Activated T-helper 1 cell treated with anti-CD3 and anti-CD28 coated beads, Interleukin-12 subunit alpha, Interleukin-12 subunit beta, Interleukin-2, Interleukin-4 antibody, amounts not matched to agents 30 ng/mL and 10 ng/mL and 1 ng/mL, durations not matched to agents 14 hours and 24 hours and 36 hours (primary cell): ENCODE measurements at regions of chr11 and their contacts with region 1.

Region 1: DNA sequence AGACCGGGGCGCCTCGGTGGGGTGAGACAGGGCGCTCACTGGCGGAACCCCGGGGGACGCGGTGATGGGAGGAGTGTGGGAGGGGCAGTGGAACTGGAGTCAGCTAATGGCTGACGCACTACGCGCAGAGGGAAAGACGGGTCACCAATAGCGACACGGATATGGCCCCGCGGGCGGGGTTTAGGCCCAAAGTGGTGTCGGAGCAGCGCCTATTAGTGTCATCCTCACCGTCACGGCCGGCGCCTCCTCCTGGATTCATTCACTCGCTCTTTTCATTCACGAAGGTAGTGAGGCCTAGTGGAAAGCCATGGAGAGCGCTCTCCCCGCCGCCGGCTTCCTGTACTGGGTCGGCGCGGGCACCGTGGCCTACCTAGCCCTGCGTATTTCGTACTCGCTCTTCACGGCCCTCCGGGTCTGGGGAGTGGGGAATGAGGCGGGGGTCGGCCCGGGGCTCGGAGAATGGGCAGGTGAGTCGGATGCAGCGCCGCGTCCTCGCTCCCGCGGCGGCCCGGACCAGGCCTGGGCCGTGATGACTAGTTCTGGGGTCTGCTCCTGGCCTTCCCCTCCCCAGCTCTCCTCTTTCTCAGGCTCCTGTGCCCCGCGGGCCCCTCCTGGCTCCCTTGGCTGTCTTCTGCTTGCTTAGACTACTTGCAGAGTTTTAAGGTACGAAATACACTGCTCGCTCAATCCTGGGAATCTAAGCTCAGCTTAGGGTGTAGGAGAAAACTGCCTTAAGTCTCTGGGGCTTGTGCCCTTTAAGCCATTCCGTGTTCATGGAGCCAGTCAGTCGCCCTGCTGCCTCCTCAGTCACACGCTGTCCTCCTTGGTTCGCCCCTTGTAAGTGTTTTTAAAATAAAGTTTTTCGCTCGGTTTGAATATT is at the start of gene HSD17B12:
- DNase-seq: peak; percentile 99
- H3K4me3 Mint-ChIP-seq: peak within 1 kb of the TSS; percentile 99
- H3K27ac Mint-ChIP-seq: peak within 1 kb of the TSS; percentile 94
- H3K4me1 Mint-ChIP-seq: peaks cover 40% of the 10 kb centered on the region
- H3K27me3 Mint-ChIP-seq: peaks cover 9% of the 10 kb centered on the region
- total RNA-seq, gene HSD17B12: 72.3 and 77.8 TPM in 2 replicates

Region 2: GRCh38 chr11:43358801-43359421 is 321.9 kb before region 1 on chr11 and contains the start of gene TTC17:
- intact Hi-C with region 1: loop called (anchors 1 kb)
- DNase-seq: peak; percentile 92
- H3K4me3 Mint-ChIP-seq: peak within 1 kb of the TSS; percentile 94
- H3K27ac Mint-ChIP-seq: peak within 1 kb of the TSS; percentile 92
- H3K4me1 Mint-ChIP-seq: peaks cover 38% of the 10 kb centered on the region
- H3K27me3 Mint-ChIP-seq: peaks cover 2% of the 10 kb centered on the region
- total RNA-seq, gene TTC17: 74.4 and 74.7 TPM in 2 replicates

Region 3: GRCh38 chr11:43788421-43788820 is 107.7 kb after region 1 on chr11:
- intact Hi-C with region 1: no loop called
- DNase-seq: no peak
- H3K4me3 Mint-ChIP-seq: no peak overlapping the region
- H3K27ac Mint-ChIP-seq: no peak overlapping the region
- H3K4me1 Mint-ChIP-seq: no peaks in the 10 kb centered on the region
- H3K27me3 Mint-ChIP-seq: no peaks in the 10 kb centered on the region

Region 4: GRCh38 chr11:43830928-43831440 is 150.2 kb after region 1 on chr11:
- intact Hi-C with region 1: loop called (anchors 1 kb)
- DNase-seq: peak; percentile 2
- H3K4me3 Mint-ChIP-seq: no peak overlapping the region
- H3K27ac Mint-ChIP-seq: peak overlapping the region; percentile 80
- H3K4me1 Mint-ChIP-seq: peaks cover 18% of the 10 kb centered on the region
- H3K27me3 Mint-ChIP-seq: no peaks in the 10 kb centered on the region

Region 5: DNA sequence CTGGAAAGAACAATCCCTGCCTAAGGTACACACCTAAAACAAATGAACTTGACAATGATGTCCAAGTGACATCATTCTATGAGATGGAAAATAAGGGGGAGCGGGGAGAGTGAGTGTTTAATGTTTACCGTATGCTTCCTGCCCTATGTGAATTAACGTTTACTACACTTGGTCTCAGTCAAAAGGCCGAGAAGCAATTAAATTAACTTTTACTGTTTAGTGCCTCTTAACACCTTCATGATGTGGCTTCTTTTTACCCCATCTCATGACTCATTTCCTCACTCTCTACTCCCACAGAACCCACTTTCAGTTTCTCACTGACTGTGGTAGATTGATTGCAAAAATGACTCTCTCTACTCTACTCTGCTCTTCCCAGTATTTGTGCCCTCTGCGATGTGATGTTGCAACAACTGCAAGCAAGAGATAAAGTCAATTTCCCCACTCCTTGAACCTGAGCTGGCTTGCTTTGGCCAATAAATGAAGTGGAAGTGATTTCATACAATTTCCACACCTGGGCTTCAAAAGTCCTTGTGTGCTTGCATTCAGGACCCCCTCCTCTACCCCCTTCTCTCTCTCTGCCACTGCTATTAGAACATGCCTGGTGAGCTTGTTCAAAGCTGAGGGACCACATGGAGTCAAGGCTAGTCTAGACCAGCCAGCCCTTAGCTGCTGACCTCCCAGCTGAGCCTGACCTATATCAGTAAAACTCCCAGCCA is 188.2 kb after region 1 on chr11:
- intact Hi-C with region 1: loop called (anchors 1 kb)
- DNase-seq: peak; percentile 57
- H3K4me3 Mint-ChIP-seq: peak overlapping the region; percentile 45
- H3K27ac Mint-ChIP-seq: peak overlapping the region; percentile 42
- H3K4me1 Mint-ChIP-seq: peaks cover 27% of the 10 kb centered on the region
- H3K27me3 Mint-ChIP-seq: peaks cover 53% of the 10 kb centered on the region

Region 6: DNA sequence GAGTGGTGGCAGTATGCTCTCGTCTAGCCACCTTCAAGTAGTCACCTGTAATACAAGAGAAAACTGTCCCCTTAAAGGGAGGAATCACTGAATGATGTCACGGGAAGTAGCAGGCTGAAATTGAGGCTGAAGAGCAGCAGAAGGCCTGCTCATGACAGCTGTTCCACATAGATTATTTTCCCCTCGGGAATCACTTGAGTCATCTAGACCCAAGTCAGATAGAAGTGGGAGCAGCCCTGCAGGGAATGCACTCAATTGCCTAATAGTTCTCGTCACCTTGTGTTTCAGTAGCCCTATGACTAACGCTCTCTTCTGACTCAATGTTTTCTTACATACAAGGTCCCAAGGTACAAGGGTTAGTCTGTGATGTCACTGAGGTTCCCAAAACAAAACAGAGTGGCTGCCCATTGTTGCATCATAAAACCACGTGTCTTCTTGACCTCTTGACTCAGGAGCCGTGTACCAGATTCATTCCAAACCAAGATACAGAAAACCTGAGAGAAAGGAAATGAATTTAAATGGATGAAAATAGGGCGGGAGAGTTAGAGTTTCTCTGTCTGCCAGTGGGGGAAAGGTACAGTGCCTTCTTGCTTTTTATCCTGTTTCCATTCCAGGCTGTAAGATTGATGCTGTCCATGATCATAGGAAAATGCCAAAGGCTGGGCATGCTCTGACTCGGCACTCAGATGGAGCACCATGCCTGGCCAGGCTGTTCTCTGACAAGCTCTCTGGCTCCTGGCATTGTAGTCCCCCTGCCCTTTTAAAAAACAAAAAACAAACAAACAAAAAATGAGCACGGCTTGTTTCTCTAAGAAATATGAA is 240.0 kb after region 1 on chr11:
- intact Hi-C with region 1: loop called (anchors 1 kb)
- DNase-seq: no peak
- H3K4me3 Mint-ChIP-seq: no peak overlapping the region
- H3K27ac Mint-ChIP-seq: peak overlapping the region; percentile 74
- H3K4me1 Mint-ChIP-seq: peaks cover 19% of the 10 kb centered on the region
- H3K27me3 Mint-ChIP-seq: no peaks in the 10 kb centered on the region

Region 7: GRCh38 chr11:44065841-44066731 is 385.3 kb after region 1 on chr11 and contains the start of gene ACCS:
- intact Hi-C with region 1: loop called (anchors 2 kb)
- DNase-seq: peak; percentile 83
- H3K4me3 Mint-ChIP-seq: peak within 1 kb of the TSS; percentile 91
- H3K27ac Mint-ChIP-seq: peak within 1 kb of the TSS; percentile 94
- H3K4me1 Mint-ChIP-seq: peaks cover 29% of the 10 kb centered on the region
- H3K27me3 Mint-ChIP-seq: peaks cover 4% of the 10 kb centered on the region
- total RNA-seq, gene ACCS: 14.7 and 18.1 TPM in 2 replicates

Region 8: DNA sequence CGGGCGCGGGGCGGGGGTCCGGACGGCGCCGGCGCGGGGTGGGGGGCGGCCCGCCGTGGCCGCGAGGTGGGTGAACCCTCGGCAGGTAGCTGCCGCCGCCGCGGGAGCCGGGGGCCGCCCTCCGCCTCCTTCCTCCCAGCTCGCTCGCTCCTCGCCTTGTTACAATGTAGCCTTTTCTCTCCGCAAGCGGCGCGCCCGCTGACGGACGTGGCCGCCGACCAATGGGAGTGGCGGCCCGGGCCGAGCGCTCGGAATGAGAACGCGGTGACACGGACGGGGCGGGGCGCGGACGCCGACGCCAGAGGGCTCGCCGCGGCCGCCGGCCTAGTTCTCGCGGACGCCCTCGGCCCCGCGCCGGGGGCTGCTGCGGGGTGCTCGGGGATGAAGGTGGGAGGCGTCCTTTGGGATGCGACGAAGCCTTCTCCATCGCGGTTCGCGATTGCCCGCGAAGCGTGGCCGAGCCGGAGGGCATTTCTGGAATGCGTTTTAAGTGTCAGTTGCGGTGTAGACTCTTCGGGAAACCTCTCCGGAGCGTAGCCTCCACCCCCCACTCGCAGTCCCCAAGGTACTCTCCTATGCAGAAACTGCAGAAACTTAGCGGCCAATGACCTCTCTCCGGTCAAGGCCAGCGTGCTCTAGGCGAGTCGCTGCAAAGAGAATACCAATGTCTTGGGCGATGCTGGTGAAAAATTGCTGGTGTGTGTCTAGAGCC is 1466.4 kb after region 1 on chr11:
- intact Hi-C with region 1: loop called (anchors 2 kb)
- DNase-seq: peak; percentile 91
- H3K4me3 Mint-ChIP-seq: peak overlapping the region; percentile 81
- H3K27ac Mint-ChIP-seq: peak overlapping the region; percentile 83
- H3K4me1 Mint-ChIP-seq: peaks cover 13% of the 10 kb centered on the region
- H3K27me3 Mint-ChIP-seq: peaks cover 35% of the 10 kb centered on the region